ENCODE measurements at regions of chr17 and their contacts with region 1.

Region 1: GRCh38 chr17:10115071-10115539 is 83.3 kb downstream of the GAS7 start:
- H3K4me3 Mint-ChIP-seq: peak overlapping the region; percentile 78
- H3K27ac Mint-ChIP-seq: peak overlapping the region; percentile 93
- H3K4me1 Mint-ChIP-seq: peaks cover 78% of the 10 kb centered on the region
- H3K27me3 Mint-ChIP-seq: no peaks in the 10 kb centered on the region

Region 2: GRCh38 chr17:9971991-9972599 is 143.0 kb before region 1 on chr17:
- intact Hi-C with region 1: loop called (anchors 5 kb)
- H3K4me3 Mint-ChIP-seq: no peak overlapping the region
- H3K27ac Mint-ChIP-seq: peak overlapping the region; percentile 16
- H3K4me1 Mint-ChIP-seq: peaks cover 55% of the 10 kb centered on the region
- H3K27me3 Mint-ChIP-seq: no peaks in the 10 kb centered on the region

Region 3: GRCh38 chr17:10059369-10060211 is 55.5 kb before region 1 on chr17:
- intact Hi-C with region 1: loop called (anchors 2 kb)
- H3K4me3 Mint-ChIP-seq: no peak overlapping the region
- H3K27ac Mint-ChIP-seq: peak overlapping the region; percentile 67
- H3K4me1 Mint-ChIP-seq: peaks cover 63% of the 10 kb centered on the region
- H3K27me3 Mint-ChIP-seq: peaks cover 5% of the 10 kb centered on the region

Region 4: GRCh38 chr17:10151667-10152496 is 36.8 kb after region 1 on chr17:
- intact Hi-C with region 1: loop called (anchors 2 kb)
- H3K4me3 Mint-ChIP-seq: no peak overlapping the region
- H3K27ac Mint-ChIP-seq: peak overlapping the region; percentile 87
- H3K4me1 Mint-ChIP-seq: peaks cover 63% of the 10 kb centered on the region
- H3K27me3 Mint-ChIP-seq: no peaks in the 10 kb centered on the region

Region 5: DNA sequence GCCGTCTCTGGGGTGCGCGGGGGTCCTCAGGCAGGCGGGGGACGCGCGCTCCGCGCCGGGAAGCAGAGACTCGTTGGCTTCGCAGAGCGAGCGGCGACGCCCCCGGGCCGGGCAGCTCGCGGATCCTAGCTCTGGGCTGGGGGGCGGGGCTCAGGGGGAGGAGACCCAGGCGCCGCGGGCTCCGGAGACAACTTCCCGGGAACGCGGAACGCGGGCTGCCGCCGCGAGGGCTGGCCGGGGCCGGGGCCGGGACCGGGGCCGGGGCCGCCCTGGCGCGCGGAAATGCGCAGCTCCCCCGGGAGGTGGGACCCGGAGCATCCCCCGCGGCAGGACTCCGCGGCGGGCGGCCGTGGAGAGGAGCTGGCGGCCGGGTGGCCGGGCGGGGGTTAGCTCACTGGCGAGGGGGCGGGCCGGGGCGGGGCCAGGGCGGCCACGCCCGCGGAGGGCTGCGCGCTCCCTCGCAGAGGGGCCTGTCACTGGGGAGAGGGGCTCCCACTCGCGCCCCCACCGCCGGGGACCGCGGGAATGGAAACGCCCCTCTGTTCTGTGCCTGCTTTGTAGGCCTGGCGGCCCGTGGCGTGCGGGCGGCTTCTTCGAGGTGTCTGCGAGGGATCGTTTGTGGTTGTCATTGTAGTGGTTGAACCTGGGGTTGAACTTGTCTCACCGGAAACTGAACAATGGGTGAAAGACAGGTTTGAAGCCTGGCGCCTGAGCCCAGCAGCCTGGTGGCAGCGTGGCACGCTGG is 83.6 kb after region 1 on chr17 and contains the start of gene GAS7:
- intact Hi-C with region 1: loop called (anchors 1 kb)
- H3K4me3 Mint-ChIP-seq: peak within 1 kb of the TSS; percentile 86
- H3K27ac Mint-ChIP-seq: peak within 1 kb of the TSS; percentile 42
- H3K4me1 Mint-ChIP-seq: peaks cover 38% of the 10 kb centered on the region
- H3K27me3 Mint-ChIP-seq: peaks cover 11% of the 10 kb centered on the region

Region 6: DNA sequence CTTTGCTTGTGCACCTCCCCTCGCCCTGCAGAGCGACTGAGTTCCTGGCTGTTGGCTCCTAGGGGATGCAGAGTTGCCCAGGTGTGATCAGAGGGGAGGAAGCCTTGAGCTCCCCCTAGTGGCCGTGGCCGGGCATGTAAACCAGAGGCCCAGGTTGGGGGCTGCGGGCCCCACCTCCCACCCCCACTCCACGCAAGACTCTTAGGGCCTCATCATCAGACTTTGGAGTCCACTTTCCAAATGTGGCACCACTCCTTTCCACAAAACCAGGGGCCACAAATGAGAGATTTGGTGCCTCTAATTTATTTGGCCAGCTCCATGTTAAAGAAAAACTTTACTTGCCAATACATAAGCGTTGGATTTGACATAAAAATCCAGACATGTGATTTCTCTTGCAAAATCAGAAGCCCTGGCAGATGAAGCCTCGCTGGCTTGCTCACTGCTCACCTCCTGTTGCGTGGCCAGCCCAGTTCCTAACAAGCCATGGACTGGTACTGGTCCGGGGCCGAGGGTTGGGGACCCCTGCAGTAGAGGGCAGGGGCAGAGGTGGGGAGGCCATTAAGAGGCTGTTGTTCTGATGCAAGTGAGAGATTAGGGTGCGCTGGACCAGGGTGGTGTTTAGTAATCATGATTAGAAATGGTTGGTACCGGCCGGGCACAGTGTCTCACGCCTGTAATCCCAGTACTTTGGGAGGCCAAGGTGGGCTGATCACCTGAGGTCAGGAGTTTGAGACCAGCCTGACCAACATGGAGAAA is 112.0 kb after region 1 on chr17:
- intact Hi-C with region 1: loop called (anchors 2 kb)
- H3K4me3 Mint-ChIP-seq: no peak overlapping the region
- H3K27ac Mint-ChIP-seq: no peak overlapping the region
- H3K4me1 Mint-ChIP-seq: peaks cover 23% of the 10 kb centered on the region
- H3K27me3 Mint-ChIP-seq: peaks cover 1% of the 10 kb centered on the region